Esophagus muscularis mucosa (tissue), 4 donors: ENCODE measurements at regions of chr15 and their contacts with region 1.

Region 1: GRCh38 chr15:45263003-45263402 is 11.0 kb downstream of the SLC28A2 start:
- DNase-seq: no peak
- H3K4me3 ChIP-seq: no peak overlapping the region
- H3K27ac ChIP-seq: no peak overlapping the region
- H3K4me1 ChIP-seq: no peaks in the 10 kb centered on the region
- H3K27me3 ChIP-seq: no peaks in the 10 kb centered on the region
- CTCF ChIP-seq: no peak
- EP300 ChIP-seq: no peak
- POLR2A ChIP-seq: no peak

Region 2: GRCh38 chr15:45221967-45222366 is 41.0 kb before region 1 on chr15:
- intact Hi-C with region 1: loop called (anchors 5 kb)
- DNase-seq: no peak
- H3K4me3 ChIP-seq: no peak overlapping the region
- H3K27ac ChIP-seq: no peak overlapping the region
- H3K4me1 ChIP-seq: no peaks in the 10 kb centered on the region
- H3K27me3 ChIP-seq: peaks cover 0 to 46% (median 0%) of the 10 kb centered on the region in 4 donors
- CTCF ChIP-seq: no peak
- EP300 ChIP-seq: no peak
- POLR2A ChIP-seq: no peak